ENCODE measurements at regions of chr12 and their contacts with region 1.

Region 1: DNA sequence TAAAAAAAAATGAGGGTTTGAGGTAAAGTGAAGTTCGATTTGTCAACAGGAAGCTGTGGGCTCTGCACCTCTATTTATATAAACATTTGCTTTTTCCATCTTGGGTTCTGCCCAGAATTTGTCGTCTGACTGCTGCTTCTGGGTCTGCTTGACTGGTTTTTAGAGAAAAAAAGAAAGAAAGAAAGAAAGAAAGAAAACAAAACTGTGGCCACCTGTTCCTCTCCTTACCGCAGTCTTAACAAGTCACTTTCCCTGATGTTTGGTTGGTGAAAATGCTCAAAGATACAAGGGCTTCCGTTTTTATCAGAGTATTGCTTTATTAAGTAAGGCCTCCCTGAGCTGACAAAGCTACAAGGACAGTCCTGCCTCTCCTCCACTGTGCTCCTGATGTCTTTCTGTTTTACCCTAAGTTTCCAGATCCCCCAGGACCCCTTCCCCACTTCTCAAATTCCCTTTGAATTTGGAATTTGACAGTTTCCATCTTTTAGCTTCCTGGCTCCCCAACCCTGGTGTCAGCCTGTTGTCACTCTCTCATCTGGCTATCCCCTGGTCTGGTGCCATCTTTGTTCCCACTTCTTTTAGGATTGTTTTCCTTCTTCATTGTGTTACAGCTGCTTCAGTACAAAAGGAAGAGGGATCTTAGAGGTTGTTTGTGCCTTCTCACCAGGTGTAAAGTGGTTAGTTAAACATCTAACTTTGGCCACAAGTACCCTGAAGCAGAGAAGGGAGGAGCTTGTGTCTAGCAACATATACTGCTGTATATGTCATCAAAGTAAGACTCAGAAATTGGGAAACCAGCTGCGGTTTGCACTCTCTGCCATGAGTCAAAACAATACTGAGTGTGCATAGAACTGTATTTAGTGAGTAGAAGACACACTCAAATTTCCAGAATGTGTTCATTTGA is 18.0 kb downstream of the MFAP5 start:
- DNase-seq: peak; percentile 89
- H3K4me3 Mint-ChIP-seq: peak overlapping the region; percentile 72
- H3K27ac Mint-ChIP-seq: peak overlapping the region; percentile 77
- H3K4me1 Mint-ChIP-seq: peaks cover 41% of the 10 kb centered on the region
- H3K27me3 Mint-ChIP-seq: peaks cover 43% of the 10 kb centered on the region

Region 2: DNA sequence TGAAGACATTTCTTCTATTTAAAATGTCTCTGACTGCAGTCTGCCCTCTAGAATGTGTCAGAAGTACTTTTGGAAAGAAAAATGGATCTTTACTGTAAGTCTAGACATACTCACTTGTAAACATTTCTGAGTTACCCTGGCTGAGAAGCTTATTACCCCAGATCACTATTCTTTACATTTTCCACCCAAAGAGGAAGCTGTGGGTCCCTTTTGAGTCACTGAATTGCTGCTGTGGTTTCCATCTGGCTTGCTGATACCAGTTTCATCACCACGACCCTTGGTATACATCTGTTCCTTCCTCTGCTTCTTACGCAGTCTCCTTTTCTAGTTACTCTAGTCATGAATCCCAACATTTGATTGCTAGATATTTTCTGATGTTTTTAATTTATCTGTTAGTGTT is 151.5 kb before region 1 on chr12:
- intact Hi-C with region 1: loop called (anchors 1 kb)
- DNase-seq: peak; percentile 82
- H3K4me3 Mint-ChIP-seq: peak overlapping the region; percentile 38
- H3K27ac Mint-ChIP-seq: peak overlapping the region; percentile 71
- H3K4me1 Mint-ChIP-seq: peaks cover 22% of the 10 kb centered on the region
- H3K27me3 Mint-ChIP-seq: peaks cover 43% of the 10 kb centered on the region

Region 3: DNA sequence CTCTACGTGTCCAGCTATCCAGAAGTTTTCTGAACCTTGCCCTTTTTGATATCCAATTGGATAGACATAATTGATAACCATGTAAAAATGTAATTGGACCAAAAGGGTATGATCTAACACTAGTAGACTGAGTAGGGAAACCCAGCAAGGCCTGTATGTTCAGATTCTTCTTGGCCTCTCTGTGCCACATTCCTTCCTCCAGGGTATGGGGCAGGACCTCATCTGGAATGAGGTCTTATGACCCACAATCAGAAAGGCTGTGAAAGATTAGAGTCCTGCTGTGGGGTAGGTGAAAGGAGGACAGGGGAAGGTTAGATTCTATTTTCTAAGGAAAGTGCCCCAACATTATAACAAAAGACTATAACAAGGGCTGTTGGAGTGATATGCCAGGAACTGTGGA is 126.5 kb after region 1 on chr12:
- intact Hi-C with region 1: no loop called
- DNase-seq: no peak
- H3K4me3 Mint-ChIP-seq: no peak overlapping the region
- H3K27ac Mint-ChIP-seq: no peak overlapping the region
- H3K4me1 Mint-ChIP-seq: no peaks in the 10 kb centered on the region
- H3K27me3 Mint-ChIP-seq: no peaks in the 10 kb centered on the region